K562 (cell line): ENCODE measurements at regions of chr15 and their contacts with region 1.

Region 1: DNA sequence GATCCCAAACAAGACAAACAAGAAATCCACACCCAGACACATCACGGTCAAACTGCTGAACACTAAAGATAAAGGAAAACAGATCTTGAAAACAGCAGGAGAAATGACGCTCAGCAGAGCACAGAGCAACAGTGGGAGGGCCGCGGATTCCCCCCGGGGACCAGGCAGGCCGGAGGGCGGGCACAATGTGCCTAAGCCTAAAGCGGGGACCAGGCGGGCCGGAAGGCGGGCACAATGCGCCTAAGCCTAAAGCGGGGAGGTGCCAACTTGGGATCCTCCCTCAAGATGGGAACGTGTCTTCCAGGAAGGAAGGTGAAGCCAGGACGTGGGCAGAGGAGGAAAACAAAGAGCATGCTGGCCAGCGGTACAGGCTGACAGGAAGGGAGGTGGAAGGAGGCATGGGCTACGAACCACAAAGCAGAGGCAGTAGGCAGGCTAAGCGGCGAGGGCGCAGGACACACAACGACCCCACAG is 31.1 kb downstream of the CYFIP1 start:
- DNase-seq: peak; percentile 70 to 73 (median 72)
- ATAC-seq: peak; percentile 89
- H3K4me3 ChIP-seq: peak overlapping the region; percentile 32
- H3K27ac ChIP-seq: peak overlapping the region; percentile 51; the same call in 2 of the 3 replicates
- H3K4me1 ChIP-seq: peaks cover 17 to 33% of the 10 kb centered on the region in 2 experiments
- H3K27me3 ChIP-seq: no peaks in the 10 kb centered on the region
- CTCF ChIP-seq: no peak
- EP300 ChIP-seq: no peak
- POLR2A ChIP-seq: no peak
- RAD21 ChIP-seq: no peak

Region 2: GRCh38 chr15:22735781-22736180 is 213.3 kb before region 1 on chr15:
- CTCF ChIA-PET with region 1: no interaction called
- POLR2A ChIA-PET with region 1: no interaction called
- in situ Hi-C with region 1: no loop called
- intact Hi-C with region 1: no loop called
- DNase-seq: no peak
- ATAC-seq: no peak
- H3K4me3 ChIP-seq: no peak overlapping the region
- H3K27ac ChIP-seq: no peak overlapping the region
- H3K4me1 ChIP-seq: no peaks in the 10 kb centered on the region
- H3K27me3 ChIP-seq: no peaks in the 10 kb centered on the region
- CTCF ChIP-seq: no peak
- EP300 ChIP-seq: no peak
- POLR2A ChIP-seq: no peak
- RAD21 ChIP-seq: no peak

Region 3: GRCh38 chr15:22978691-22979520 is 29.8 kb after region 1 on chr15:
- CTCF ChIA-PET with region 1: no interaction called
- POLR2A ChIA-PET with region 1: no interaction called
- in situ Hi-C with region 1: no loop called
- intact Hi-C with region 1: loop called (anchors 1 kb)
- DNase-seq: peak; percentile 47 to 69 (median 51)
- ATAC-seq: peak; percentile 83
- H3K4me3 ChIP-seq: peak overlapping the region; percentile 79
- H3K27ac ChIP-seq: no peak overlapping the region
- H3K4me1 ChIP-seq: peaks cover 9 to 33% of the 10 kb centered on the region in 2 experiments; a peak in 4 of 5 replicates
- H3K27me3 ChIP-seq: no peaks in the 10 kb centered on the region
- CTCF ChIP-seq: no peak
- EP300 ChIP-seq: no peak
- POLR2A ChIP-seq: no peak
- RAD21 ChIP-seq: no peak

Region 4: DNA sequence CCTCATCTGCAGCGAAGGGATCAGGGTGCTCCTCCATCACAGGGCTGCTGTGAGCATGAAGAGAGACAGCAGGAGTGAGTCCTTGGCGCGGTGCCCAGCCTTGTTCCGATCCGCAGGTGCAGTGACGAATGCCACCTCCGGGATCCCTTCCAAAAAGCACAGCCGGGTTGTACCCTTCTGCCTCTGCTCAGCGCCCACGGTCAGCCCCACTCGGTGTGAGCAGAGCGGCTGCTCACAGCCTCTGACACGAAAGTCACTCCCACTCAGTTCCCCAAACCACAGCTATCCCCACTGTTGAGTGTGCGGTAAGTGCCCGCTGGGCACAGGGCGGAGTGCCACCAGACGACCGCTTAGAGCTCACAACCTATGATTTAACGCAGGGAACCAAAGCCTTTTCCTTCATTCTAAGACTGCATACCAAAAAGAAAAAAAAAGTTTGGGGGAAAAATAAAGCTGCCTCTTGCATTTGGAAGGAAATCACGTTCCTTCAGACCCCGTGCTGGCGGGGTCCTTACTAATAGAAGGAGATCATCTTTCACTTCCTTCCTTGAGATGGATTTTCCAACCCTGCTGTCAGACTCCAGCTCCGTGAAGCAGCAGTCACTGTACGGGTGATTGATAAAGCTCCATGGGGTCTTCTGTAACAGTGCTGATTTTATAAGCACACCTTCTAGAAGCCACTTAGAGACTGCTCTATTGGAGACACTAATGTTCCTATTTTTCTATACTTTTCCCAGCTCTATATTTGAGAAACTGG is 125.0 kb after region 1 on chr15:
- CTCF ChIA-PET with region 1: no interaction called
- POLR2A ChIA-PET with region 1: no interaction called
- in situ Hi-C with region 1: no loop called
- intact Hi-C with region 1: no loop called
- DNase-seq: no peak
- ATAC-seq: no peak
- H3K4me3 ChIP-seq: no peak overlapping the region
- H3K27ac ChIP-seq: no peak overlapping the region
- H3K4me1 ChIP-seq: peaks cover 0 to 5% of the 10 kb centered on the region in 2 experiments; a peak in 2 of 5 replicates
- H3K27me3 ChIP-seq: peaks cover 17 to 23% of the 10 kb centered on the region in 2 experiments; a peak in 4 of 5 replicates
- CTCF ChIP-seq: no peak
- EP300 ChIP-seq: no peak
- POLR2A ChIP-seq: no peak
- RAD21 ChIP-seq: no peak